ENCODE measurements at regions of chr3 and their contacts with region 1.

Region 1: GRCh38 chr3:105518806-105519418 is 152.2 kb downstream of the ALCAM start:
- DNase-seq: peak; percentile 73
- ATAC-seq: peak; percentile 75
- H3K4me3 ChIP-seq: no peak overlapping the region
- H3K27ac ChIP-seq: no peak overlapping the region
- H3K4me1 ChIP-seq: no peaks in the 10 kb centered on the region; the same call in 1 of the 2 replicates
- H3K27me3 ChIP-seq: no peaks in the 10 kb centered on the region
- CTCF ChIP-seq: peak; percentile 68
- POLR2A ChIP-seq: no peak
- RAD21 ChIP-seq: peak; percentile 79

Region 2: GRCh38 chr3:104273046-104273649 is 1245.8 kb before region 1 on chr3:
- CTCF ChIA-PET with region 1: no interaction called
- POLR2A ChIA-PET with region 1: no interaction called
- dilution Hi-C with region 1: no loop called
- in situ Hi-C with region 1: loop called (anchors 10 kb)
- intact Hi-C with region 1: loop called (anchors 2 kb)
- DNase-seq: peak; percentile 53
- ATAC-seq: peak; percentile 76
- H3K4me3 ChIP-seq: no peak overlapping the region
- H3K27ac ChIP-seq: no peak overlapping the region
- H3K4me1 ChIP-seq: no peaks in the 10 kb centered on the region
- H3K27me3 ChIP-seq: no peaks in the 10 kb centered on the region; the same call in 1 of the 2 replicates
- CTCF ChIP-seq: peak; percentile 84
- POLR2A ChIP-seq: no peak
- RAD21 ChIP-seq: peak; percentile 86

Region 3: DNA sequence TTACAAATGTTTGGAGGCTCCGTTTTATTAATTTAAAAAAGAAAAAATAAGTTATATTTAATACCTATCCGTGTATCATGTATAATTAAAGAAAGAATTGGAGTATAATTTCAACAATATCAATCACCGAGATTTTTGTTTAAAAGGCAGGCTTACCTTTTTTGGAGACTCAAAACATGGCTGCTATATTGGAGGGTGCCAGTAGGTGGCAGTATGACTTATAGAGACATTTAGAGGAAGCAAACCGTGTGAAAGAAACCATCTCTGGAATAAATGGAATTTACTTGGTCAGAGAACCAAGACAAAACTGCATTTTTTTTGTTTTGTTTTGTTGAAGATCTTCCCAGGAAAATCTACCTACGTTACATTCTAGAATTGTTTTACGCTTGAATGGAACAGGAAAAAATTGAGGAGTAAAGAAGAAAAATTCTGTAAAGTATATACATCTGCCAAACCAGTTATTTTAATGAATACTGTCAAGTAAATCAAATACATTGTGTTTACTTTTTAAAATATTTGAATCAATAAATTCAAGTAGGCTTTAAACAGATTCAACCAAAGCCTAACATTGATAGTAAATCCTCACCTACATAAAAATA is 954.8 kb before region 1 on chr3:
- CTCF ChIA-PET with region 1: no interaction called
- POLR2A ChIA-PET with region 1: no interaction called
- dilution Hi-C with region 1: no loop called
- in situ Hi-C with region 1: no loop called
- intact Hi-C with region 1: loop called (anchors 2 kb)
- DNase-seq: peak; percentile 52
- ATAC-seq: 0 out of 2 replicates have a peak, but pooled peaks have one; percentile 42
- H3K4me3 ChIP-seq: no peak overlapping the region
- H3K27ac ChIP-seq: no peak overlapping the region
- H3K4me1 ChIP-seq: no peaks in the 10 kb centered on the region
- H3K27me3 ChIP-seq: no peaks in the 10 kb centered on the region
- CTCF ChIP-seq: peak; percentile 56
- POLR2A ChIP-seq: no peak
- RAD21 ChIP-seq: peak; percentile 56

Region 4: DNA sequence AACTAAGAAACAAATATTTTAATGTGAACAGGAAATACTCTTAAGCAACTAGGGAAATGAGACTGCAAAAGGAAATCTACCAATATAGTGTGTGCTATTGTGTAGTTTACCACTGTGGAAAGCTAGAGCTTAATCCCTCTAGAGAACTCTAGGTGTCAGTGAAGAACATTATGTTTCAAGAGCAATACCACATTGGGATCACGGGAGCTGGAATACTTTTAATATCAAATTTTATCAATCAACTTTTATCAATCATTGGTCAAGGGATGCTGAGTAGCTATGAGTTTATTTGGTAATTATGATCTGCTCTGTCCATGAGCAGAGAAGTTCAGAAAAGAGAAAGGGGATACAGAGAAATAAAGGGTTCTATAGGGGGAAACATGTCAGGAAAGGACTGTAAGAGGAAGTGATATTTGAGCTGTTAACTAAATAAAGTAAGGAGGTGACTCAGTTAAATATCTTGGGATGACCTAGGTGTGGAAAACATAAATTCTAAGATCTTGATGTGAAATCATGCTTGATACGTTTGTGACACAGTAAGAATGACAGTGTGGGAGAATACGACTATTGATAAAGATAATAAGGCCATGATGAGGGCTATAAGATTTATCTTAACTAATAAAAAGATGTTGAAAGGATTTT is 914.4 kb before region 1 on chr3:
- CTCF ChIA-PET with region 1: interaction called, 4 read pairs
- POLR2A ChIA-PET with region 1: no interaction called
- dilution Hi-C with region 1: no loop called
- in situ Hi-C with region 1: no loop called
- intact Hi-C with region 1: loop called (anchors 5 kb)
- DNase-seq: peak; percentile 48
- ATAC-seq: peak; percentile 86
- H3K4me3 ChIP-seq: no peak overlapping the region
- H3K27ac ChIP-seq: no peak overlapping the region
- H3K4me1 ChIP-seq: no peaks in the 10 kb centered on the region
- H3K27me3 ChIP-seq: no peaks in the 10 kb centered on the region
- CTCF ChIP-seq: peak; percentile 51
- POLR2A ChIP-seq: no peak
- RAD21 ChIP-seq: peak; percentile 53

Region 5: GRCh38 chr3:104909198-104909597 is 609.7 kb before region 1 on chr3:
- CTCF ChIA-PET with region 1: no interaction called
- POLR2A ChIA-PET with region 1: no interaction called
- dilution Hi-C with region 1: no loop called
- in situ Hi-C with region 1: no loop called
- intact Hi-C with region 1: loop called (anchors 2 kb)
- DNase-seq: peak; percentile 92
- ATAC-seq: peak; percentile 89
- H3K4me3 ChIP-seq: no peak overlapping the region
- H3K27ac ChIP-seq: peak overlapping the region; percentile 74
- H3K4me1 ChIP-seq: peaks cover 5% of the 10 kb centered on the region
- H3K27me3 ChIP-seq: no peaks in the 10 kb centered on the region
- CTCF ChIP-seq: no peak
- POLR2A ChIP-seq: no peak
- RAD21 ChIP-seq: no peak

Region 6: GRCh38 chr3:105385819-105386508 is 132.9 kb before region 1 on chr3:
- CTCF ChIA-PET with region 1: no interaction called
- POLR2A ChIA-PET with region 1: no interaction called
- dilution Hi-C with region 1: no loop called
- in situ Hi-C with region 1: no loop called
- intact Hi-C with region 1: loop called (anchors 5 kb)
- DNase-seq: no peak
- ATAC-seq: no peak
- H3K4me3 ChIP-seq: no peak overlapping the region
- H3K27ac ChIP-seq: no peak overlapping the region
- H3K4me1 ChIP-seq: peaks cover 4% of the 10 kb centered on the region; the same call in 1 of the 2 replicates
- H3K27me3 ChIP-seq: no peaks in the 10 kb centered on the region
- CTCF ChIP-seq: no peak
- POLR2A ChIP-seq: no peak
- RAD21 ChIP-seq: no peak

Region 7: DNA sequence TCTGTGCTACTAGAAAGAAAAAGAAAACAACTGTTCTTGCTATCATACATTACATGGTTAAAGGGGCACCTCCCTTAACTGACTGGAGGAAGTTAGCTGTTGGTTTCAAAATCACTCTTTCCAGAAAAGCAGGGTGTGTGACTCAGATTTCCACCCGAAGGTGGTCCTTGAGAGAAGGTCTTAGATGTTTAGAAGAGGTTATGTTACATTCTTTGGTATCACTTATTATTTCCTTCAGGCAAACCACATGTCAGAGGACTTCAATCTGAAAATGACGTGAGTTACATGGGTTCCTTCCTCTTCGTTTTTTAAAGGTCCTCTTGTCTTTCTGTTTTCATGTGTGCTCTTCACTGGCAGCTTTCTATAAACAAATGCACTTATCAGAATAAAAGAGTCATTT is 657.8 kb after region 1 on chr3:
- CTCF ChIA-PET with region 1: no interaction called
- POLR2A ChIA-PET with region 1: no interaction called
- dilution Hi-C with region 1: no loop called
- in situ Hi-C with region 1: no loop called
- intact Hi-C with region 1: no loop called
- DNase-seq: peak; percentile 23
- ATAC-seq: peak; percentile 60; the same call in 1 of the 2 replicates
- H3K4me3 ChIP-seq: peak overlapping the region; percentile 41; the same call in 1 of the 2 replicates
- H3K27ac ChIP-seq: no peak overlapping the region
- H3K4me1 ChIP-seq: no peaks in the 10 kb centered on the region
- H3K27me3 ChIP-seq: no peaks in the 10 kb centered on the region
- CTCF ChIP-seq: no peak
- POLR2A ChIP-seq: no peak
- RAD21 ChIP-seq: no peak

Measured in IMR-90 (cell line).